ENCODE measurements at regions of chr2 and their contacts with region 1.

Region 1: DNA sequence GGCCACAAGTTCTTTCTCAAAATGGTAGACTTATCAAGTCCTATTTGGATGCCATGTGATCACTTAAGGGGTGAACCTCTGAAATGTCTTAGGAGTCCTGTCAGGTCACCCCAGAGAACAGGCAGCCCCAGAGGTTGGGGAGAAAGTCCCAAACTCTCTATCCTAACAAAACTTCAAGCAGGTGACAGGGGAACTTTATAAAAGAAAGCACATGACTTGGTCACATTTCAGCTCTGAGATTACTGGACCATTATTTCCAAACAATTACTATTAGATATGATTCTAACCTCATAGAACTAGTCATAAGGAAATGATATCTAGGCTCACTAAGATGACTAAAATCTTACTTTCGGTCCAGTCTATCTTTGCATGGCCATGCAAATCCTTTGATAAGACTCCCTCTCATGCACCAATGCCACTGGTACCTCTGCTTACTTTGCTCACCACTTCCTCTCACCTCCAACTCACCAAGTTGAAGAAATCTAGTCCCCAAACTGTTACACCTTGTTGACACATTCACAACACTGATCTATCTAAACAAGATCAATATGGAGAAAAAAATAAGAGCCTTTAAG is 107.0 kb downstream of the GALNT14 start:
- DNase-seq: no peak
- H3K4me3 ChIP-seq: no peak overlapping the region
- H3K27ac ChIP-seq: no peak overlapping the region
- H3K4me1 ChIP-seq: peaks cover 0 to 6% (median 0%) of the 10 kb centered on the region in 4 experiments; a peak in 2 of 7 replicates
- H3K27me3 ChIP-seq: no peaks in the 10 kb centered on the region
- CTCF ChIP-seq: no peak
- EP300 ChIP-seq: no peak
- POLR2A ChIP-seq: no peak
- RAD21 ChIP-seq: no peak

Region 2: GRCh38 chr2:31049916-31050588 is 18.8 kb after region 1 on chr2:
- CTCF ChIA-PET with region 1: interaction called, 16 read pairs
- POLR2A ChIA-PET with region 1: no interaction called
- DNase-seq: no peak
- H3K4me3 ChIP-seq: no peak overlapping the region
- H3K27ac ChIP-seq: no peak overlapping the region
- H3K4me1 ChIP-seq: no peaks in the 10 kb centered on the region
- H3K27me3 ChIP-seq: no peaks in the 10 kb centered on the region
- CTCF ChIP-seq: no peak
- EP300 ChIP-seq: no peak
- POLR2A ChIP-seq: no peak
- RAD21 ChIP-seq: no peak